ENCODE measurements at regions of chr13 and their contacts with region 1.

Region 1: DNA sequence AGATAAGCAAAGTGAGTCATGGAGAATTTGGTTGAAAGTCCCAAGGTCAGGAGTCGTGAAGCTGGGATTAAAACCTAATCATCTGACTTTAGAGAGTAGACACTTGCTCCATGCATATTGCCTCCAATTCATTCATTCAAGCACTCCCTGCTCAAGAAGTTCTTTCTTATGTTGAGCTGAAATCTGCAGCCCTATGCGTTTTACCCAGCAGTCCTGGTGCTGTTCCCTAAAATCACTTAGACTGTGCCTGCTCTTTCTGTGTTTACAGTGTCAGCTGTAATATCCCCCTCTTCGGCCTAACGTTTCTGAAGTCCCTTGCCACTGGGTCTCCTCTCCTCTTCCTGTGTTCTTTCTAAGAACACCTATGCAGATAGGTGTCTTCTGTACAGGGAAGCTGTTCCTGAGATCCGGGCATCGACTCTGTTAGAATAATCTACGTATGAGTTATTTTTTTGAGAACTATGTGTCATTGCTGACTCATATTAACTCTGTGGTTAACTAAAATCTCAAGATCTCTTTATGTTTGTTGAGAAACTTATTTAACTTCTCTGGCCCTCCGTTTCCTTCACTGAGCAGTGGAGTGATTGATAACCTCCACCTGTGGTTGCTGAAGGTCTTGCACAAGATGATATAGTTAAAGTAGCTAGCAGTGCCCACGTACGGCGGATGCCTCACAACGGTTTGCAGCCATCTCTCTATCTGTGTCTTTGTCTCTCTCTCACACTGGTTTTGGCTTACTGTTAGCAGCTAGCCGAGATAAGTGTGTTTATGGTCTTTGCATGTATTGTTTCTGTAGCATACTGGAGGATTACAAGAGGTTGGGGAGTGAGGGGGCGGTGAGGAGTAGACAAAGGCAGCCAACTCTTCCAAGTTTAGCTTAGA is 4.7 kb downstream of the ALOX5AP start:
- DNase-seq: peak; percentile 78
- H3K4me3 Mint-ChIP-seq: peak overlapping the region; percentile 23
- H3K27ac Mint-ChIP-seq: peak overlapping the region; percentile 68
- H3K4me1 Mint-ChIP-seq: peaks cover 34% of the 10 kb centered on the region
- H3K27me3 Mint-ChIP-seq: no peaks in the 10 kb centered on the region
- CTCF ChIP-seq: no peak

Region 2: DNA sequence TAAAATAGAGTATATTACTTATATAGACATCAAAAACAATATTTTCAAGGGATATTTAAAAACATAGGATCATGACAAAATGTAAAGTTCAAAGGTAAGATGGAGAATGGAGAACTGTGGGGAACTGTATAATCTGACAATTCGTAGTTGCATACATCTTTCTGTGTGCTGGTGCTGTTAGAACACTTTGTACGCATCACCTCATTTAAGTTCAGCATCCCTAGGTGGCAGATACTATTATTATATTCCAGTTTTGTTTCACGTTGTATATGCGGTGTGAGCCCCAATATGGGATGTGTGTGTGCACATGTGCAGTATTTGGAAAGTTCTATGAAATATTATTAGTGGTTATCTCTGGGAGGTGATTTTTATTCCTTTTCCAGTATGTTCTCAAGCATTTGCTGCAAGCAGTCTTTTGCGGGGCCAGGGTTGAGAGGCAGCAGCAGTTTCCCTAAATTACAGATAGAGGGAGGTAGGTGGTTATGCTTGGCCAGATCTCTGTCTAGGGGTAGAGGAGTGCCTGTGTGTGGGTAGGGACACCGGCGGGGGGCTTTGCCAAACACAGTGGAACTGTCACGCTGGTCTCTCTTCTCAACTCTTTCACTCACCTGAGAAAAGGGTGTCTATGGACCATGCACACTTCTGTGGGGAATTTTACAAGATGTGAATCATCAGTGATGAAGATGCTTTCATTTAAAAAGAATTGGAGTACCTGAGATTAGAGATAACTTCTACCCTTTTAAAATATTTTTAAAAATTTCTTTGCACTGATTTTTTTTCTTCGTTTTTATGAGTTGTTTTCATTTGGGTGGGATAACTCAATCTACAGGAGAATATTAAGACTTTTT is 60.3 kb before region 1 on chr13:
- CTCF ChIA-PET with region 1: interaction called, 3 read pairs
- POLR2A ChIA-PET with region 1: no interaction called
- intact Hi-C with region 1: loop called (anchors 5 kb)
- DNase-seq: peak; percentile 44
- H3K4me3 Mint-ChIP-seq: no peak overlapping the region
- H3K27ac Mint-ChIP-seq: no peak overlapping the region
- H3K4me1 Mint-ChIP-seq: no peaks in the 10 kb centered on the region
- H3K27me3 Mint-ChIP-seq: no peaks in the 10 kb centered on the region
- CTCF ChIP-seq: peak; percentile 41

Region 3: GRCh38 chr13:30690282-30691188 is 49.5 kb before region 1 on chr13:
- CTCF ChIA-PET with region 1: interaction called, 6 read pairs
- POLR2A ChIA-PET with region 1: no interaction called
- intact Hi-C with region 1: loop called (anchors 5 kb)
- DNase-seq: peak; percentile 75
- H3K4me3 Mint-ChIP-seq: peak overlapping the region; percentile 79
- H3K27ac Mint-ChIP-seq: peak overlapping the region; percentile 93
- H3K4me1 Mint-ChIP-seq: peaks cover 6% of the 10 kb centered on the region
- H3K27me3 Mint-ChIP-seq: no peaks in the 10 kb centered on the region
- CTCF ChIP-seq: no peak

Region 4: GRCh38 chr13:30792285-30793000 is 52.4 kb after region 1 on chr13:
- CTCF ChIA-PET with region 1: interaction called, 6 read pairs
- POLR2A ChIA-PET with region 1: interaction called, 8 read pairs
- intact Hi-C with region 1: loop called (anchors 5 kb)
- DNase-seq: peak; percentile 92
- H3K4me3 Mint-ChIP-seq: no peak overlapping the region
- H3K27ac Mint-ChIP-seq: no peak overlapping the region
- H3K4me1 Mint-ChIP-seq: peaks cover 22% of the 10 kb centered on the region
- H3K27me3 Mint-ChIP-seq: no peaks in the 10 kb centered on the region
- CTCF ChIP-seq: peak; percentile 42

Region 5: GRCh38 chr13:30847650-30848307 is 107.8 kb after region 1 on chr13:
- CTCF ChIA-PET with region 1: no interaction called
- POLR2A ChIA-PET with region 1: no interaction called
- intact Hi-C with region 1: no loop called
- DNase-seq: peak; percentile 96
- H3K4me3 Mint-ChIP-seq: peak overlapping the region; percentile 13
- H3K27ac Mint-ChIP-seq: peak overlapping the region; percentile 29
- H3K4me1 Mint-ChIP-seq: peaks cover 12% of the 10 kb centered on the region
- H3K27me3 Mint-ChIP-seq: no peaks in the 10 kb centered on the region
- CTCF ChIP-seq: no peak

Measured in MCF 10A (cell line).